Sigmoid colon (tissue), 7 donors: ENCODE measurements at regions of chr9 and their contacts with region 1.

Region 1: DNA sequence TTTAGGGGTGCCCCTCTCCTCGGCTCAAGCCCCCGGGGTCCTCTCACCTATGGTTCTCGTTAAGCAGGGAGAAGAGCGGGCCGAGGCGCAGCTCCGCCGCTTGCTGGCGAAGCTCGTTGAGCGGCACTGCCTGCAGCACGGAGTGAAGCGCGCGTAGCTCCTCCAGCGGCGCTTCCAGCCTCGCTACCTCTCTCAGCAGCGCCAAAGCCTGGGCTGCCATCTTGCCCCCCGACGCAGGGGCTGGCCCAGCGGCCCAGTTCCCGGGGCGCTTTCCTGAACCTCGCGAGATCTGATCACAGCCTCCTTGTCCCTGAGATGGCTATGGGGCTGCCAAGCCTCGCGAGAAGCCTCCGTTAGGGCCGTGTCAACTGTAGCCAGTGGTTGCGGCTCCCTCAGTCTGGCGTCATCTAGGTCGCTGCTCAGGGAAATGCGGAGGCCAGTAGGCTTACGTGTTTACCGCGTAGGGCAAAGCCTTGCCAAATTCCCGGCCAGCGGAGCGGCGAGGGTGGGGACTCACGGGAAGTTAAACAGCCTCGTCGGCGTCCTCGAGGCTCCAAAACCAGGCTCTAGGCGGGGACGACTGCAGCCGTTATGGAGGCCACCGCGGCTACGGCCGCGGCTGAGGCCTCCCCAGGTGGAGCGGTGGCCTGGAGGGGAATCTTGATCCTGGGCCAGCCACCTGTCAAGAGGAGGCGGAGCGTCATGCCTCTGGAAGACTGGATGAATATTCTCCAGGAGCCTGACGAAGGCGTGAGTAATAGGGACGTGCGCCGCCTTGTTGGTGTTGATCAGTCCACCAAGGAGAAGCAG is at the start of gene PSMD5:
- DNase-seq: peak; percentile 100
- H3K4me3 ChIP-seq: peak within 1 kb of the TSS; percentile 69 to 85 (median 73)
- H3K27ac ChIP-seq: peak within 1 kb of the TSS; percentile 90 to 98 (median 94)
- H3K4me1 ChIP-seq: peaks cover 0 to 47% (median 42%) of the 10 kb centered on the region in 4 donors
- H3K27me3 ChIP-seq: no peaks in the 10 kb centered on the region
- CTCF ChIP-seq: no peak
- EP300 ChIP-seq: peak in 2 of 4 donors; percentile 40 to 71
- POLR2A ChIP-seq: peak; percentile 73 to 88
- total RNA-seq, gene PSMD5: 28.6 to 42.6 (median 37.8) TPM

Region 2: GRCh38 chr9:120792898-120793765 is 49.8 kb before region 1 on chr9 and contains the start of gene FBXW2:
- intact Hi-C with region 1: loop called (anchors 2 kb)
- DNase-seq: peak; percentile 95
- H3K4me3 ChIP-seq: peak within 1 kb of the TSS; percentile 69 to 95 (median 90)
- H3K27ac ChIP-seq: peak within 1 kb of the TSS; percentile 86 to 94 (median 91)
- H3K4me1 ChIP-seq: peaks cover 0 to 39% (median 30%) of the 10 kb centered on the region in 4 donors
- H3K27me3 ChIP-seq: no peaks in the 10 kb centered on the region
- CTCF ChIP-seq: peak in 1 of 4 experiments; percentile 31
- EP300 ChIP-seq: peak in 1 of 4 donors; percentile 35
- POLR2A ChIP-seq: peak; percentile 91 to 94
- total RNA-seq, gene FBXW2: 30.9 to 61.8 (median 36.3) TPM

Region 3: GRCh38 chr9:120868676-120869359 is 25.9 kb after region 1 on chr9:
- intact Hi-C with region 1: loop called (anchors 1 kb)
- DNase-seq: peak; percentile 98
- H3K4me3 ChIP-seq: peak overlapping the region; percentile 47 to 60 (median 57)
- H3K27ac ChIP-seq: peak overlapping the region; percentile 85 to 93 (median 88)
- H3K4me1 ChIP-seq: peaks cover 0 to 20% (median 13%) of the 10 kb centered on the region in 4 donors
- H3K27me3 ChIP-seq: no peaks in the 10 kb centered on the region
- CTCF ChIP-seq: peak in 2 of 4 experiments; percentile 20 to 36
- EP300 ChIP-seq: no peak
- POLR2A ChIP-seq: peak; percentile 17 to 75